ENCODE measurements at regions of chr18 and their contacts with region 1.

Region 1: DNA sequence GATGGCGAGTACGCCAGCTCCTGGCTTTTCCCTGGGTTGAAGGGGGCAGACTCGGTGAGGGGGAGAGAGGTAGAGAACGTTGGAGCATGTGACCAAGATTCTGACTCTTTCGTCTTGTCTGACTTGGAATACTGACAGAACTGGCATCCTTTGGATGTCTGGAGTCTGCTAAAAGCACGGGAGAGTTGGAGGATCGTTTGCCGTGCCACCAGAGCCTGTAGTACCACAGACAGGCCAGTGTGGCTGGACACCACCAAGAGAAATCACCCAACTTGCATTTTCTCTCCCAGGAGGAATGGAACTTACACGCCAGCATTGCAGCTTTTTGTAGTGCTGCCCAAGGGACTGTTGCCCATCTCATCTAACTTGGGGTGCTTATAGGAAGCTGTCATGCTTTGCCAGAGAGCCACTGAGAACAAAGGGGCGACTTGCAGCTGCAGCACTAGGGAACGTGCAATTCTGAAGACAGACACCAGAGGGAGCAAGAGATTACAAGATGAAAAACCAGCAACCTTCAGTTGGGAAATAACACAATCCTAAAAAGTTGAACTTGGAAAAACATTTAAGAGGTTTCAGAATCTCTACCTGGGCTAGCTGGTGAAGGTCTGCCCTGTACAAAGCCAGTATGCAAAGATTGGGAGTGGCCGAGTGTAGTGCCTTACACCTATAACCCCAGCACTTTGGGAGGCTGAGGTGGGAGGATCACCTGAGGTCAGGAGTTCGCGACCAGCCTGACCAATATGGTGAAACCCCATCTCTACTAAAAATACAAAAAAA is 24.1 kb downstream of the PSMG2 start:
- DNase-seq: peak; percentile 65
- ATAC-seq: peak; percentile 36
- H3K4me3 ChIP-seq: no peak overlapping the region
- H3K27ac ChIP-seq: no peak overlapping the region
- H3K4me1 ChIP-seq: peaks cover 32% of the 10 kb centered on the region
- H3K27me3 ChIP-seq: no peaks in the 10 kb centered on the region; a peak in 1 of 5 replicates
- CTCF ChIP-seq: peak; percentile 88
- EP300 ChIP-seq: no peak
- POLR2A ChIP-seq: no peak
- RAD21 ChIP-seq: peak; percentile 88

Region 2: DNA sequence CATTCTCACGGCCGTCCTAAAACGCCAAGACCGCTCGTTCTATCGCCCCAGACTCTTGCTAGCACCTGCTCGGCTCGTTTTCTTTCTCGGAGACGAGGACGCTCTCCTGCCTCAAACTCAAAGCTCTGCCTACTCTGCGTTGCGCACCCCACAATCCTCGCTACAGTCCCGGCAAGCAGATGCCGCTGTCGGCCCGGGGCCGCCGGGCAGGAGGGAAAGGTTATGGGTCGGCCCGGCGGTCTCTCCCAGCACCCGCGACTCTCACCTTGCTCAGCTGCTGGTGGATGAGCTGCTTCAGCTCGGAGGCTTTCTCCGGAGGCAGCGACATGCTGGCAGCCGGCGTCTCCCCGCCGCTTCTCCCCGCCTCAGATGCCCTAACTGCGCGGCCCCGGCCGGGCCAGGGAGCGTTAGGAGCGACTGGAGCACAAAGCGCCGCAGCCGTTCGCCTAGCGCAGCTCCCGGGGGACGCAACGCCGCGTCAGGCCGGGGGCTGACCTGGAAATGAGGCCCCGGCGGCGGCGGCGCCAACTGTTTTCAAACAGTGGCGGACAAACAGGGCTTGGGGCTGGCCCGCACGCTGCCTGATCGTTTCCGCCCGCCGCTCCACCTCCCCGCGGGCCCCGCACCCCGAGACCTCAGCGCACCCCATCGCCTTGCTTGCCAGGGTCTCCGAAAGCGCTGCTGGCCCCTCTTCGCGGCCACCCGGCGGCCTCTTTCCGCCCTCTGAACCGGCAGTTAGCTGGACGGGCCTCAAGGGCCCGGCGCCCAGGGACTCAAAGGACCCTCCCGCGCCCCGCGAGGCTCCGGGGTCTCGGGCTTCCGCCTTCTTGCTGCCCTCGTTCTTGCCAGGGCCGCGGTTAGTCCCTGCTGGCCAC is 24.5 kb before region 1 on chr18 and contains the starts of genes CEP76 and PSMG2:
- CTCF ChIA-PET with region 1: no interaction called
- POLR2A ChIA-PET with region 1: interaction called, 14 read pairs
- in situ Hi-C with region 1: no loop called
- intact Hi-C with region 1: no loop called
- DNase-seq: peak; percentile 81
- ATAC-seq: peak; percentile 96
- H3K4me3 ChIP-seq: peak within 1 kb of the TSS; percentile 91 to 99 (median 93)
- H3K27ac ChIP-seq: peak within 1 kb of the TSS; percentile 89
- H3K4me1 ChIP-seq: peaks cover 57% of the 10 kb centered on the region
- H3K27me3 ChIP-seq: no peaks in the 10 kb centered on the region; a peak in 2 of 5 replicates
- CTCF ChIP-seq: 0 out of 2 replicates have a peak, but pooled peaks have one; percentile 2
- EP300 ChIP-seq: peak in 1 of 2 experiments; percentile 13; a peak in 1 of 4 replicates
- POLR2A ChIP-seq: peak; percentile 82 to 91
- RAD21 ChIP-seq: peak; percentile 43; the same call in 1 of the 2 replicates
- total RNA-seq, gene CEP76: 15.1 and 19.4 TPM in 2 replicates
- total RNA-seq, gene PSMG2: 94.8 and 133 TPM in 2 replicates

Region 3: DNA sequence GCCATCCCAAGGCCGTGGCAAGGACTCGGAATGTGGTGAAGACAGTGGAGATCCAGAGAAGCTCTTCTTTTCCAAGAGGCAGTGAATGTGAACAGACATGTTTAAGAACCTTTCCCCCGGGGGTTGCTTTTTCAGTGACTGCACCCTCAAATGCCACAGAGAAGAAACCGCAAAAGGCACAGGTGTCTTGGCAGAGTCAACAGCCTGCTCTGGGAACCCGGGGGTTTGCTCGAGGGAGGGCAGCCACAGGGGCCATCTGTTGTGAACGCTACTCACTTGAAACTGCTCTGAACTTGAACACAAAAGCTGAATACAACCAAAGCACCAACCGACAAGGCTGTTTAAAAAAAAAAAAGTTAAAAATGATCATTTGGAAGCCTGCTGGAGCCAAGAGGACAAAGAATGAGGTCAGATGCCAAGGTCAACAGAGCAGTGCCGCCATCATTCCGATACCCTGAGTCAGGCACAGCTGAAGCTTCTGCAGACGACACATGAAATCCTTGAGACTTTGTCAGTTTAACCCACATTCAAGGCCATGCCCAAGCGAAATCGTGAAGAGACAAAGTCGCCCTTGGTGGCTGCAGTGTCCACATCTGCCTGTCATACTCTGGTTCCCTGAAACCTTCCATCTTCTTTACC is 23.2 kb after region 1 on chr18:
- CTCF ChIA-PET with region 1: no interaction called
- POLR2A ChIA-PET with region 1: interaction called, 13 read pairs
- in situ Hi-C with region 1: no loop called
- intact Hi-C with region 1: no loop called
- DNase-seq: no peak
- ATAC-seq: no peak; the same call in none of the 3 replicates
- H3K4me3 ChIP-seq: peak overlapping the region in 1 of 3 experiments; percentile 11; a peak in 1 of 6 replicates
- H3K27ac ChIP-seq: no peak overlapping the region
- H3K4me1 ChIP-seq: peaks cover 26% of the 10 kb centered on the region
- H3K27me3 ChIP-seq: no peaks in the 10 kb centered on the region
- CTCF ChIP-seq: no peak
- EP300 ChIP-seq: no peak
- POLR2A ChIP-seq: no peak
- RAD21 ChIP-seq: no peak

Region 4: GRCh38 chr18:12838178-12838634 is 111.2 kb after region 1 on chr18:
- CTCF ChIA-PET with region 1: no interaction called
- POLR2A ChIA-PET with region 1: no interaction called
- in situ Hi-C with region 1: no loop called
- intact Hi-C with region 1: loop called (anchors 1 kb)
- DNase-seq: peak; percentile 90
- ATAC-seq: peak; percentile 98
- H3K4me3 ChIP-seq: peak overlapping the region in 2 of 3 experiments; percentile 23 to 37; a peak in 4 of 6 replicates
- H3K27ac ChIP-seq: peak overlapping the region; percentile 85
- H3K4me1 ChIP-seq: peaks cover 24% of the 10 kb centered on the region
- H3K27me3 ChIP-seq: no peaks in the 10 kb centered on the region
- CTCF ChIP-seq: no peak
- EP300 ChIP-seq: peak; percentile 22 to 69; a peak in 2 of 4 replicates
- POLR2A ChIP-seq: no peak
- RAD21 ChIP-seq: no peak

Region 5: GRCh38 chr18:12934454-12935071 is 207.6 kb after region 1 on chr18:
- CTCF ChIA-PET with region 1: interaction called, 22 read pairs
- POLR2A ChIA-PET with region 1: interaction called, 11 read pairs
- in situ Hi-C with region 1: loop called (anchors 5 kb)
- intact Hi-C with region 1: no loop called
- DNase-seq: peak; percentile 82
- ATAC-seq: peak; percentile 94
- H3K4me3 ChIP-seq: no peak overlapping the region; a peak in 1 of 6 replicates
- H3K27ac ChIP-seq: no peak overlapping the region
- H3K4me1 ChIP-seq: peaks cover 57% of the 10 kb centered on the region
- H3K27me3 ChIP-seq: no peaks in the 10 kb centered on the region
- CTCF ChIP-seq: peak; percentile 97
- EP300 ChIP-seq: no peak
- POLR2A ChIP-seq: no peak
- RAD21 ChIP-seq: peak; percentile 94

Measured in HepG2 (cell line).